Esophagus muscularis mucosa (tissue), 4 donors: ENCODE measurements at regions of chr16 and their contacts with region 1.

Region 1: DNA sequence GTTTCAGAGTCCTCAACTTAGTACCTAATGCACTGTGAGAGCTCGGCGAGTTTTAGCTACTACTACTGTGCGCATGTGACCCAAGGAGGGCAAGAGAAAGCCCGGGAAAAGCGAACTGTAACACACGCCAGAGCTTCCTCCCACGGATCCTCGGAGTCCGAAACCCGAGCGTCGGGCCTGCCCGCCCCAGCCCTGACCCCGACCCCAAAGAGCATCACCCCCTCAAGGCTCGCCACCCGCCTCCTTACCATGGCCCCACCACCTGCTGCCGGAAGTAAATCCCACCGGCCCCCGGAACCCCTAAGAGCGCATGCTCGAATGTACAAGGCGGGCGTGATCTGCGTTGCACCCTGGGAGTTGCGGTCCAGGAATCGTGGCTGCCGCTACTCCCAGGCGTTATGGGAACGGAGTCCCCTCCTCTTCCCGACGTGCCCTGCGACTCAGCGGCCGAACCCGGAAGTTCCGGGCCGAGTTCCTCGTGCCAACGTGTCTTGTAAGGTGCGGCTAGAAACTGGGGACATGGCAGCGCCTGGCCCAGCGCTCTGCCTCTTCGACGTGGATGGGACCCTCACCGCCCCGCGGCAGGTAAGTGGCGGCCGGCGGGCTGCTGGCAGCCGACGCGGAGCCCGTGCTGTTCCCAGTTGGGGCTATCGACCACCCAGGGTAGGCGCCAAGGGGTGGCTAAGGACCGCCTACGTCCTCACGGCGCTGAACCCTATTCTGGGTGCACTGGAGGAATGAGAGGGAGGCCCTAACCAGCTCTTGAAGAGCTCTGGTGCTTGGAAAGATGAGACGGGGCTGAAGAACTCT is at the starts of genes PMM2 and TMEM186:
- DNase-seq: peak; percentile 97
- H3K4me3 ChIP-seq: peak within 1 kb of the TSS; percentile 72 to 98 (median 96)
- H3K27ac ChIP-seq: peak within 1 kb of the TSS; percentile 79 to 88 (median 82)
- H3K4me1 ChIP-seq: peaks cover 25 to 47% (median 43%) of the 10 kb centered on the region in 4 donors
- H3K27me3 ChIP-seq: no peaks in the 10 kb centered on the region
- CTCF ChIP-seq: peak in 1 of 3 experiments; percentile 24
- EP300 ChIP-seq: no peak
- POLR2A ChIP-seq: no peak
- total RNA-seq, gene PMM2: 19.6 to 34.3 (median 23.5) TPM
- total RNA-seq, gene TMEM186: 7.9 to 12.2 (median 9.6) TPM

Region 2: DNA sequence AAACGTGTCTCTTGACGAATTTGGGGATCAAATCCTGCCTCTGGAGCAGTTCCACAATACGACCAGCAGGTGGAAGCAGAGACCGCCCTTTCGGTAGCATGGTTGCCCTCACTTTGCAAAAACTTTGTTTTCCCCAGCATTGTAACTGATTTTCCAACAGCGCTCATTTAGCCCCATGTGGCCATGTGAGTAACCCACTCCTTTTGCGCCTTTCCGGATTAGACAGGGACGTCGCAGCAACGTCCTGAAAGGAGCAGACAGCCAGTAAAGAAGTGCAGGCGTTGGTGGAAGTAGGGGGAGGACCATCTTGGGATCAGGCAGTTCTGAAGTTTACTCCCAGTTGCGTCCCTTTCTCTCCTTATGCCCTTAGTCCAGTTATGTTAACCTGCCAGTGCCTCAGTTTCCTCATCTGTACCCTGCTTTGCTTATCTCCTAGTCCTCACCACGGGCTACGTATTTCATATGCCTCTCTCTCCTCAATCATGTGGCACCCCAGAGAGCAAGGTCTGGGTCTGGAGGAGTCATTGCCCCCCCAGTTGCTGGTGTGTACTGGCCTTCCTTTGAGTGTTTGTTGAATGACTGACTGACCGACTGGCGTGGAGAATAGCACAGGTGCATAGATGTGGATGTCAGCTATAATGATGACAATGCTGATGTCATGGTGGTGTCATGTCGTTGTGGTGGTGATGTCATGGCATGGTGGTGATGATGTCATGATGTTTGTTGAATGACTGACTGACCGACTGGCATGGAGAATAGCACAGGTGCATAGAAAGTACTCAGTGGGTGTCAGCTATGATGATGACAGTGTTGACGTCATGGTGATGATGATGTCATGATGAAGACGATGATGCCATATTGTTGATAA is 229.6 kb before region 1 on chr16:
- intact Hi-C with region 1: loop called (anchors 5 kb)
- DNase-seq: peak; percentile 93
- H3K4me3 ChIP-seq: no peak overlapping the region
- H3K27ac ChIP-seq: no peak overlapping the region
- H3K4me1 ChIP-seq: peaks cover 6 to 41% (median 35%) of the 10 kb centered on the region in 4 donors
- H3K27me3 ChIP-seq: peaks cover 0 to 17% (median 0%) of the 10 kb centered on the region in 4 donors
- CTCF ChIP-seq: peak; percentile 95 to 98 (median 96)
- EP300 ChIP-seq: no peak
- POLR2A ChIP-seq: no peak

Region 3: DNA sequence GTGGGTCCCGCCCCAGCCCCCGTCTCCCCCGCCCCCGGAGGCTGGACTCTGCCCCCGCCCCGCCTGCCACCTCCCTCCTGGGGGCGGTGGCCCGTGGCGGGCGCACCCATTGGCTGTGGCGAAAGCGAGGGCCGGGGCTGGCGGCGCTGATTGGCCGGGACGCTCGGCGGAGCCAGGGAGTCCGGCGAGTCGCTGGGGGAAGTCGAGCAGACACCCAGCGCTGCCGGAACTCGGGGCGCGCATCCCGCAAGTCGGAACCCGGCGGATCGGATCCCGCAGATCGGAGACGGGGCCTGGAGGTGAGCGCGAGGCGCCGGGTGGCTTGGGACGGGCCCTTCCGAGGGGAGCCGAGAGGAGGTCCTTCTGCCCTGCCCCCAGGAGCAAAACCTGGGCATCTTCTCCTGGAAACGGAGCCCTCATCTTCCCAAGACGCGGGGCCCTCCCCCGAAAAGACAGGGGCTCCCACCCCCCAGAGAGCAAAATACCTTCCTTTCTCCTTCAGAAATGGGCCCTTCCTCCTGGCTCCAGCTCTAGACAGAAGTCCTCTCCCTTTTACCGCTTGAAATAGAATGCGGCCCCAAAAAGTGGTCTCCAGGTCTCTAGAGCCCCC is 123.1 kb before region 1 on chr16 and contains the start of gene ABAT:
- intact Hi-C with region 1: loop called (anchors 5 kb)
- DNase-seq: peak; percentile 97
- H3K4me3 ChIP-seq: peak within 1 kb of the TSS; percentile 65 to 80 (median 71)
- H3K27ac ChIP-seq: peak within 1 kb of the TSS in 3 of 4 donors; percentile 32 to 56 (median 49)
- H3K4me1 ChIP-seq: peaks cover 4 to 23% (median 17%) of the 10 kb centered on the region in 4 donors
- H3K27me3 ChIP-seq: no peaks in the 10 kb centered on the region
- CTCF ChIP-seq: no peak
- EP300 ChIP-seq: no peak
- POLR2A ChIP-seq: no peak
- total RNA-seq, gene ABAT: 9.0 to 16.9 (median 13.4) TPM

Region 4: DNA sequence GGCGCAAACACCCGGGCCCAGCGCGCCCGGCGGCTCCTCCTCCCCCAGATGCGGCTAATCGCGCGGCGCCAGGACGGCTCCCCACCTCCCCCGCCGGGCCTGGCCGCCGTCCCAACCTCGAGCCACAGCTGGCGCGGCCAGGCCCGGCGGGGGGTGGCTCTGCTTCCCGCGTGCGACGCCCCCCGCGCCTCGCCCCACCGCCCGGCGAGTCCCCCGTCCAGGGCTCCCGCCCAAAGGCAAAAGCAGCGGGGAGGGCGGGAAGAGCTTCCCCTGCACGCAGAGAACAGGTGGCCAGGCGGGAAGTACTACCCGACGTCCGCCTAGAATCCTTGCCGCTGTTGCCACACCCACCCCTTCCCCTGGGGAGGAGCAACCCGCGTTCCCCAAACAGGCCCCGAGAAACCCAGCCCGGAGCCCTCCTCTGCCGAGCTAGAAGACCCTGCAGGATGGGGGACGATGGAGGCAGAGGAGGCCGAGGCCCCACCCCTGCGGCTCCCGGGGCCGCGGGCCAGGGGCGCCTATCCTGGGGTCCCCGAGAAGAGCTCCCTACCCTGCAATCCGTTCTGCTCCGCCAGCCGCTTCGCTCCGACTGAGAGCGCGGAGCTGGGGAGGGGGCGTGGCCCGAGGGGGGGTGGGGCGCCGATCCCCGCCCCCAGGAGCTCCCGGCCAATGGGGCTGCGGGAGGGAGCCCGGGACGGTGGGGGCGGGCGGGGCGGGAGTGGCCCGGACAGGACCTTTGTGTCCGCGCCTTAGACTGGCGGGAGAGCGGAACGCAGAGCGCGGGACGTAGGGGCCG is 71.0 kb after region 1 on chr16 and contains the start of gene CARHSP1:
- intact Hi-C with region 1: loop called (anchors 5 kb)
- DNase-seq: peak; percentile 96
- H3K4me3 ChIP-seq: peak within 1 kb of the TSS; percentile 66 to 77 (median 72)
- H3K27ac ChIP-seq: peak within 1 kb of the TSS; percentile 74 to 87 (median 84)
- H3K4me1 ChIP-seq: peaks cover 38 to 63% (median 57%) of the 10 kb centered on the region in 4 donors
- H3K27me3 ChIP-seq: peaks cover 0 to 13% (median 3%) of the 10 kb centered on the region in 4 donors
- CTCF ChIP-seq: no peak
- EP300 ChIP-seq: no peak
- POLR2A ChIP-seq: no peak
- total RNA-seq, gene CARHSP1: 33.2 to 95.8 (median 73.9) TPM

Region 5: GRCh38 chr16:8919089-8919933 is 121.7 kb after region 1 on chr16:
- intact Hi-C with region 1: no loop called
- DNase-seq: no peak
- H3K4me3 ChIP-seq: no peak overlapping the region
- H3K27ac ChIP-seq: no peak overlapping the region
- H3K4me1 ChIP-seq: peaks cover 0 to 8% (median 6%) of the 10 kb centered on the region in 4 donors
- H3K27me3 ChIP-seq: no peaks in the 10 kb centered on the region
- CTCF ChIP-seq: no peak
- EP300 ChIP-seq: no peak
- POLR2A ChIP-seq: no peak